CD8-positive, alpha-beta T cell (primary cell): ENCODE measurements at regions of chr11 and their contacts with region 1.

Region 1: DNA sequence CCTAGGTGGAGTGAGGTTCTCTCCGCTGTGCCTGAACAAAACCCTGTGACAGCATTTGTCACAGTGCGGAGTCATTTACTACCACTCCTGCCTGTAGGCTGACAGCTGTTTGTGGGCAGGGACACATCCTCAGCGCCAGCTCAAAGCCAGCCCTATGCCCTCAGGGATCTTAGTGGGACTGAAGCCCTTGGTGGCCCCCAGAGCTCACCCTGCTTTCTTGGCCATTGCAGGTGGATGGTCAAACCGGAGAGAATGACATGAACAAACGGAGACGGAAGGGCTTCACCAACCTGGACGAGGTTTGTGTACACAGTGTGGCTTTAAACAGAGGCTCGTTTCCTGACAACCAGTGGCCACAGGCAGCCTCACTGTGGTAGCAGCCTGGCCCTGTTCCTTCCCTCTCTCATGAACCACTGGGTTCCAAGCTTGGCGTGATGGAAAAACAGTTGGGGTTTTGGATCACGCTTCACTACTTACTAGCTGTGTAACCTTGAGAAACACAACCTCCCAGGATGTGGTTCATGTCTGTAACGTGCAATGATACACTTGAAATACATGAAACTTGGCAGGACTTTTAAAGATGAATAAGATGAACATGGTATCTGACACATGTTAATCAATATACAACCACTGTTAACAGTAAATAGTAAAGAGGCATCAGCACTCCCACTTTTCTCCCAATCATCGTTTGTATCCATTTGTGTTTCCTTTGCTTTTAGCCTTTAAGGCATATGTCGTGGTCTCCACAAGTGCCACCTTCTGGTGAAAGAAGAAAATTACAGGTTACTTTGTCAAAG is 125.8 kb downstream of the MICAL2 start:
- DNase-seq: peak in 7 of 9 experiments; percentile 25 to 83 (median 60)
- ATAC-seq: peak; percentile 80
- H3K4me3 ChIP-seq: peak overlapping the region in 1 of 2 experiments; percentile 18
- H3K4me3 Mint-ChIP-seq: peak overlapping the region; percentile 49
- H3K27ac ChIP-seq: peak overlapping the region; percentile 38 to 69
- H3K27ac Mint-ChIP-seq: peak overlapping the region; percentile 92
- H3K4me1 ChIP-seq: peaks cover 14% of the 10 kb centered on the region
- H3K4me1 Mint-ChIP-seq: peaks cover 18% of the 10 kb centered on the region
- H3K27me3 ChIP-seq: no peaks in the 10 kb centered on the region
- H3K27me3 Mint-ChIP-seq: no peaks in the 10 kb centered on the region
- CTCF ChIP-seq: peak; percentile 74

Region 2: DNA sequence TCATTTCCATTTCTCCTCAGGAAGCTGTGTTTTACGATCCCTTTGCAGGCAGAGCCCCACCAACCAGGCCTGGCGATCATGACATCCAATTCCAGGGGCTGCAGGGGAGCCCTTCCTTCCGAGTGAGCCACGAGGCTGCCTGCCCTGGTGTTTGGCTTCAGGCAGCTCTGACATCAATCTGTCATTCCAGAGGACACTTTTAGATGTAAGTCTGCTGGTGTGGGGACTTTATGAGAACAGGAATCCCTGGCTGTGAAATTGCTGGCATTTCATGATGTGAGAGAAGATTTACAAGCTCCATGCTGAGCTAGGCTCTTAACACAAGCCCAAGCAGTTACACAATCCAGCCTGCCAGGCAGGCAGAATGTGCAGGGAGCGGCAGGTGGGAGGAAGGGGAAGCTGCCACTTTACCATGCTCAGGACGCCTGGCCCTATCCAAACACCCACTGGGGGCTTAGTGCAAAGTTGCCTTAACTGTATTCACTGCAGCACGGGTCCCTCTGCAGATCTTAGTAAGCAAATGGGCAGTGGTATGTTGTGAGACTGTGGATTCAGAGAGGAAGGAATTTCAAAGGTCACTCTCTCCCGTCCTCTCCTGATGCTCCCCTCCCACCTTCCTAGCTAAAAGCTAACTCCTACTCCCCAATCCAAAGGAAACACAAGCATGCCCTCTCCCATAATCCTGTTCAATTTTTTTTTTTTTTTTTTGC is 169.2 kb before region 1 on chr11:
- CTCF ChIA-PET with region 1: interaction called, 12 read pairs
- POLR2A ChIA-PET with region 1: interaction called, 3 read pairs
- intact Hi-C with region 1: no loop called
- DNase-seq: no peak
- ATAC-seq: no peak
- H3K4me3 ChIP-seq: no peak overlapping the region
- H3K4me3 Mint-ChIP-seq: no peak overlapping the region
- H3K27ac ChIP-seq: no peak overlapping the region
- H3K27ac Mint-ChIP-seq: no peak overlapping the region
- H3K4me1 ChIP-seq: no peaks in the 10 kb centered on the region
- H3K4me1 Mint-ChIP-seq: peaks cover 2% of the 10 kb centered on the region
- H3K27me3 ChIP-seq: no peaks in the 10 kb centered on the region
- H3K27me3 Mint-ChIP-seq: no peaks in the 10 kb centered on the region
- CTCF ChIP-seq: no peak

Region 3: DNA sequence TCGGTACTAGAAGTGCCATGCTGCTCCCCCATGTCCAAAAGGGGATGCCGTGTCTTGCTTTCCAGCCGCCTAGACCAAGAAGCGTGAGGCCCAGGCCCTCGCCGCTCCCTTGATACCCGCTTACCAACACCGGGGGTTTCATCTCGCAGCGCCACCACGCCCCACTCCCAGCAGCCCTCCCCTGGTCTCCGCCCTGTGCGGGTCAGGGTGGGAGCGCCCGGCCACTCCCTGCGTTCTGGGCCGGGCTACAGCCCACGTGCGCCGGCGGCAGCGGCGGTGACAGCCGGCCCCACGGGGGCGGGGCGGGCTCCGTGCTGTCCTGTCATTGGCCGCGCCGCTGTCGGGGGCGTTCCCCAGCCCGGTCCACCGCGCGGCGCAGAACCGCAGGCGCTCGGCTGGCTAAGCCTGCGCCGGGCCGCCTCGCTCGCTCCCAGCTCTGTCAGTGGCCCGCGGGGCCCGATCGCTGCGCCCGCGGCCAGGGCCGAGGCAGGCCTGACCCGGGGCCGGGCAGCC is 125.9 kb before region 1 on chr11 and contains the start of gene MICAL2:
- CTCF ChIA-PET with region 1: interaction called, 11 read pairs
- POLR2A ChIA-PET with region 1: no interaction called
- intact Hi-C with region 1: loop called in 1 of 2 experiments (anchors 1 kb)
- DNase-seq: peak; percentile 61 to 92 (median 79)
- ATAC-seq: peak; percentile 94
- H3K4me3 ChIP-seq: peak within 1 kb of the TSS; percentile 44 to 56
- H3K4me3 Mint-ChIP-seq: peak within 1 kb of the TSS; percentile 83
- H3K27ac ChIP-seq: peak within 1 kb of the TSS in 1 of 2 experiments; percentile 5
- H3K27ac Mint-ChIP-seq: peak within 1 kb of the TSS; percentile 70
- H3K4me1 ChIP-seq: peaks cover 13% of the 10 kb centered on the region
- H3K4me1 Mint-ChIP-seq: peaks cover 17% of the 10 kb centered on the region
- H3K27me3 ChIP-seq: no peaks in the 10 kb centered on the region
- H3K27me3 Mint-ChIP-seq: no peaks in the 10 kb centered on the region
- CTCF ChIP-seq: no peak
- total RNA-seq, gene MICAL2: 15.8 TPM

Region 4: GRCh38 chr11:12137938-12138731 is 98.0 kb before region 1 on chr11:
- CTCF ChIA-PET with region 1: interaction called, 22 read pairs
- POLR2A ChIA-PET with region 1: no interaction called
- intact Hi-C with region 1: no loop called
- DNase-seq: no peak
- ATAC-seq: no peak
- H3K4me3 ChIP-seq: no peak overlapping the region
- H3K4me3 Mint-ChIP-seq: no peak overlapping the region
- H3K27ac ChIP-seq: no peak overlapping the region
- H3K27ac Mint-ChIP-seq: no peak overlapping the region
- H3K4me1 ChIP-seq: peaks cover 27% of the 10 kb centered on the region
- H3K4me1 Mint-ChIP-seq: peaks cover 40% of the 10 kb centered on the region
- H3K27me3 ChIP-seq: no peaks in the 10 kb centered on the region
- H3K27me3 Mint-ChIP-seq: no peaks in the 10 kb centered on the region
- CTCF ChIP-seq: no peak

Region 5: DNA sequence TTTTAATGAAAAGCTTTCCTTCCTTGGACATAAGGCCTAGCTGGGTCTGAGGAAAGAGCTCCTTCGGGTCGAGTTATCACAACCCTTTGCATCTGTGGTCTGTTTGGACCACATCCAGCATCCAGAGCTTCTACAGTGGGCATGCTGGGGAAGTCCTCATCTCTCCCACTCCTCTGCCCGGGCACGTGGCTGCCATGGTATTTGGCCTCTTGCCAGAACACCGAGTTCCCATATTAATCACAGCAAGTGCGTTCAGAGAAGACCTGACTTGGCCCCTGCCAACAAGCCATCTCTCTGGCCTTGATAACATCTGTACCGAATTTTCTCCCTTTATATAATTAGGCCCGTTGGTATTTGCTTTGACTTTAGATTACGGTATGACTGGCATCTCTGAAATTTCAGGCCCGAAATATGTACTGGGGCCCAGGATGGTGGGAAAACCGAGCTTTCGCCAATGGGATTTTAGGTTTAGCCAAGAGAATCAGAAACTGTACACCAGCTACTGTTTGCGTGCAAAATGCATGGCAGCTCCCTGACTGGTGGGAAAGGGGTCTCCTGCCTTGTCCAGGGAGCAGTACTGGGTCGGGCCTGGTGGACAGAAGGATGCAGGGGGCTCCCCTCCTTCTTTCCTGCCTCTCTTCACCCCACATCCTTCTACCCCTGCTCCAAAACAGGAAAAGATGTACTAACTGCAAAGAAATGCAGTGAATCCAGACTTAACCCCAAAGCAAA is 35.7 kb before region 1 on chr11:
- CTCF ChIA-PET with region 1: interaction called, 13 read pairs
- POLR2A ChIA-PET with region 1: interaction called, 7 read pairs
- intact Hi-C with region 1: loop called (anchors 1 to 2 kb)
- DNase-seq: no peak
- ATAC-seq: no peak
- H3K4me3 ChIP-seq: no peak overlapping the region
- H3K4me3 Mint-ChIP-seq: no peak overlapping the region
- H3K27ac ChIP-seq: no peak overlapping the region
- H3K27ac Mint-ChIP-seq: peak overlapping the region; percentile 74
- H3K4me1 ChIP-seq: peaks cover 39% of the 10 kb centered on the region
- H3K4me1 Mint-ChIP-seq: peaks cover 54% of the 10 kb centered on the region
- H3K27me3 ChIP-seq: no peaks in the 10 kb centered on the region
- H3K27me3 Mint-ChIP-seq: no peaks in the 10 kb centered on the region
- CTCF ChIP-seq: no peak

Region 6: DNA sequence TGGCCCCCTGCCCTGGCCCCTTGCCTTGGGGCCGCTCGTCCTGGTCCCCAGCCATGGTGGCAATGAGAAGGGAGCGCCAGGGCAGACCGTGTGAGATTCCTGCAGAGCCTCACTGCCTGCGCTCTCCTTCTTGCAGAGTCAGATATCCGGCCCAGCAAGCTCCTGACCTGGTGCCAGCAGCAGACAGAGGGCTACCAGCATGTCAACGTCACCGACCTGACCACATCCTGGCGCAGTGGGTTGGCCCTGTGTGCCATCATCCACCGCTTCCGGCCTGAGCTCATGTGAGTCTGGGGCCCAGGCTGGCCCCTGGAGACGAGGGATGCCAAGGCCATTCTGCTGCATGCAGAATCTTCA is 11.6 kb before region 1 on chr11:
- CTCF ChIA-PET with region 1: interaction called, 27 read pairs
- POLR2A ChIA-PET with region 1: interaction called, 19 read pairs
- intact Hi-C with region 1: loop called in 1 of 2 experiments (anchors 1 kb)
- DNase-seq: peak; percentile 76 to 96 (median 92)
- ATAC-seq: peak; percentile 89
- H3K4me3 ChIP-seq: peak overlapping the region; percentile 35 to 50
- H3K4me3 Mint-ChIP-seq: peak overlapping the region; percentile 65
- H3K27ac ChIP-seq: peak overlapping the region; percentile 47 to 91
- H3K27ac Mint-ChIP-seq: peak overlapping the region; percentile 91
- H3K4me1 ChIP-seq: peaks cover 45% of the 10 kb centered on the region
- H3K4me1 Mint-ChIP-seq: peaks cover 51% of the 10 kb centered on the region
- H3K27me3 ChIP-seq: no peaks in the 10 kb centered on the region
- H3K27me3 Mint-ChIP-seq: no peaks in the 10 kb centered on the region
- CTCF ChIP-seq: no peak